Naive thymus-derived CD4-positive, alpha-beta T cell (primary cell): ENCODE measurements at regions of chr7 and their contacts with region 1.

Region 1: DNA sequence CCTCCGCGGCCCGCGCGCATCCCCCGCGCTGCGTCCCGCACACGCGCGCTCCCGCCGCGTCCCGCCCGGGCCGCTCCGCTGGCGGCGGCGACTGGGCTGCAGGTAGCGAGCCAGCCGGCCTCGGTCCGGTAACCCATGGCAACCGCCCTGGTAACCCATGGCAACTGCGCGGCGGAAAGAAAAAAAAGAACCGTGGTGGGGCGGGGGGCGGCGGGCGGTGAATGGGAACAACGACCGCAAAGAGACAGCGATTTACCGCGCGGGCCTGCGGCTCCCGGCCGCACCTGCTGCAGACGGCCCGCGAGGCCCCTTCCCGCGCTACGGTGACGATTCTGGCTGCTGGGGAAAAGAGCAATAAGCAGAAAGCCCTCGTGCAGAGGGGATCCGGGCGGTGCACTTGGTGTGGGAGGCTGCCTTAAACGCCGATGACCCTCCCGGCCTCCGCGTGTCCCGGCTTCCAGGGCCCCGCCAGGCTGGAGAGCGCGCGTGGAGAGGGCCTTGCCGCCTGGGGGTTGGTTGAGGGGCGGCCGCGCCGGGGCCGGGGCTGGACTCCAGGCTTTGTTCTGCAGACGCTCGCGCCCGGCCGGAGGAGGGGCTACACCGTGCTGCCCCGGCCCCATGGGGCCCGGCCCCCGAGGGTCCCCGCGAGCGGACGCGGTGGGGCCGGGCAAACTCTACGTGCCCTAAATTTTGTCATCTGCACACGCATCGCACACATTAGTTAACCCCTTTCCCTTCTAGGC is 84.7 kb downstream of the SNX10 start:
- DNase-seq: peak in 7 of 9 donors; percentile 13 to 56 (median 20)
- ATAC-seq: peak; percentile 51
- H3K4me3 ChIP-seq: peak overlapping the region; percentile 54
- H3K4me3 Mint-ChIP-seq: peak overlapping the region; percentile 83 to 95 (median 85)
- H3K27ac ChIP-seq: no peak overlapping the region
- H3K27ac Mint-ChIP-seq: peak overlapping the region in 1 of 9 donors; percentile 65
- H3K4me1 ChIP-seq: peaks cover 4 to 6% of the 10 kb centered on the region in 2 donors
- H3K4me1 Mint-ChIP-seq: peaks cover 0 to 8% (median 4%) of the 10 kb centered on the region in 7 donors
- H3K27me3 ChIP-seq: peaks cover 4 to 24% of the 10 kb centered on the region in 2 donors
- H3K27me3 Mint-ChIP-seq: peaks cover 28 to 62% (median 37%) of the 10 kb centered on the region in 5 donors

Region 2: DNA sequence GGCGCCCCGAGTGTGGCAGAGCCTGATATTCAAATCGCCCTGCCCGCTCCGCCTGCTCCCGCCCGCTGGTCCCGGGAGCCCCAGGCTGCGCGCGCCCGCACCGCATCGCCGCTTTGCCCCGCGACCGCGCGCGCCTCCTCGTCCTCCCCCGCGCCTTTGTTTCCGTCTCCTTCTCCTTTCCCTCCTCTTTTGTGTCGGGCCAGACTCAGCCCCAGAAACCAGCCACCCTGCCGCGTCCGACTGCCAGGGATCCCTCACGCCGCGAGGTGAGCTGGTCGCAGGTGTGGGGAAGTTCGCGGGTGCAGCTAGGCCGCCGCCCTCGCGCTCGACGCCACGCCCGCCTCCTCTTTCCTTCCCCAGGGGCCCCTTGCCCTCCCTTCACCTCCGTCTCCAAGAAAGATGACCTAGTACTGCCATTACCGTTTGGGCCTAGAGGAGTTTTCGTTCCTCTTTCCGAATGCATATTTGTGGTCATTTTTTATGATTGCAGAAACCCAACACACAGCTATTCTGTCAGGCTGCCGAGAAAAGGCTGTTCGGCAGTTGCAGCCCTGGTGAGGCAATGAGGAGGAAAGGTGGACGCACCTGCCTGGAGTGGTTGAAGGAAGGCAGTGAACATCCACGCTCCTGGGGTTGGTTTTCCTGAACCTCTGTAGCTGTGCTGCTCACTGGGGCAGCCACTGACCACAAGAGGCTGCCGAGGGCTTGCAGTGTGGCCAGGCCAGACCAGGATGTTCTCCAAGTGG is 22.6 kb after region 1 on chr7:
- CTCF ChIA-PET with region 1: no interaction called
- POLR2A ChIA-PET with region 1: no interaction called
- intact Hi-C with region 1: loop called in 1 of 2 experiments (anchors 2 kb)
- DNase-seq: peak in 6 of 9 donors; percentile 8 to 62 (median 10)
- ATAC-seq: peak; percentile 78
- H3K4me3 ChIP-seq: peak overlapping the region; percentile 46
- H3K4me3 Mint-ChIP-seq: peak overlapping the region; percentile 72 to 98 (median 90)
- H3K27ac ChIP-seq: no peak overlapping the region
- H3K27ac Mint-ChIP-seq: peak overlapping the region in 2 of 9 donors; percentile 20 to 73
- H3K4me1 ChIP-seq: no peaks in the 10 kb centered on the region
- H3K4me1 Mint-ChIP-seq: peaks cover 7 to 16% (median 12%) of the 10 kb centered on the region in 7 donors
- H3K27me3 ChIP-seq: peaks cover 0 to 6% of the 10 kb centered on the region in 2 donors
- H3K27me3 Mint-ChIP-seq: peaks cover 34 to 62% (median 55%) of the 10 kb centered on the region in 5 donors

Region 3: DNA sequence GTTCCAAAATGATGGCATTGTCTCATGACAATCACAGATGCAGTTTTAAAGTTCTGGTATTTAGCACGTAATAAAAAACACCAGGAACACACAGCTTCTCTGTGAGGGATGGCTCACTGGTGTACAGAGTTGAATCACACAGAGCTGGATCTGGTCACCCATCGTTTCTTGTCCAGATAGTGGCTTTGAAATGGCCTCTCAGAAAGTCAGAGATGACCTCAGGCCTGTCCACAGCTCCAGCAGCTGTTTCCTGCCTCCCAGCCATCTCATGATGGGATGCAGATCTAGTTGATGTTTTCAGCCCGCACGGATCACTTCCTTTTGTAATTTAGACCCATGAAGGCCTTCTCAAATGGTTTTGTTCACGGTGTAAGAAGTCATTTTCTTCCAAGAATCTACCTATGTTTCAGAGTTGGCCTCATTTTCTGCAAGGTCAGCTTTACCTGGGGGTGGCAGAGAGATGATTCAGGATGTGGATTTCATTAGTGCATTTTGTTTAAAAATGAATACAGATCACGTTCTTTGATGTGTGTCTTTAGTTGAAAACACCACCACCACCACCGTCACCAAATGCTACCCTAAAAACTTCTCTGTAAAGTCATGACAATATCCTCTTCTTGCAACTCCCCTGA is 81.5 kb after region 1 on chr7:
- CTCF ChIA-PET with region 1: no interaction called
- POLR2A ChIA-PET with region 1: no interaction called
- intact Hi-C with region 1: no loop called
- DNase-seq: no peak
- ATAC-seq: no peak
- H3K4me3 ChIP-seq: no peak overlapping the region
- H3K4me3 Mint-ChIP-seq: no peak overlapping the region
- H3K27ac ChIP-seq: no peak overlapping the region
- H3K27ac Mint-ChIP-seq: no peak overlapping the region
- H3K4me1 ChIP-seq: no peaks in the 10 kb centered on the region
- H3K4me1 Mint-ChIP-seq: no peaks in the 10 kb centered on the region
- H3K27me3 ChIP-seq: no peaks in the 10 kb centered on the region
- H3K27me3 Mint-ChIP-seq: peaks cover 0 to 14% (median 9%) of the 10 kb centered on the region in 5 donors

Region 4: DNA sequence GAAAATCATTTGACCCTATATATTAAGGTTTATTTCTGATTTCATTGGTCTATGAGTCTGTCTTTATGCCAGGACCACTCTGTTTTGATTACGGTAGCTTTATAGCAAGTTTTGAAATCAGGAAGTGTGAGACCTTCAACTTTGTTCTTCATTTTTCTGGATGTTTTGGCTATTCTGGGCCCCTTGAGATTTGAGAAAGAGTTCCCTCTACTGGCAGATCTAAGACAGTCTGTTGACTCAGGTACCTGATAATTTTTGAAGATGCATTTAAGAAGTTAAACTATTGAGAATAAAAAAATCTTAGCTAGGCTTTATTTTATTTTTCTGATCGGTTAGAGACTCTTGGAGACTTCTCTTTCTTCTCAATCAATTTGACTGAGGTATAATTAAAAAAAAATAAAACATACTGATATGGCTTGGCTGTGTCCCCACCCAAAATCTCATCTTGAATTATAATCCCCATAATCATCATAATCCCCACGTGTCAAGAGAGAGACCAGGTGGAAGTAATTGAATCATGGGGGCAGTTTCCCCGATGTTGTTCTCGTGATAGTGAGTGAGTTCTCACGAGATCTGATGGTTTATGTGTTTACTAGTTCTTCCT is 124.5 kb after region 1 on chr7:
- CTCF ChIA-PET with region 1: no interaction called
- POLR2A ChIA-PET with region 1: interaction called, 3 read pairs
- intact Hi-C with region 1: loop called (anchors 1 kb)
- DNase-seq: peak in 3 of 9 donors; percentile 7 to 18 (median 9)
- ATAC-seq: peak; percentile 46
- H3K4me3 ChIP-seq: no peak overlapping the region
- H3K4me3 Mint-ChIP-seq: no peak overlapping the region
- H3K27ac ChIP-seq: no peak overlapping the region
- H3K27ac Mint-ChIP-seq: no peak overlapping the region
- H3K4me1 ChIP-seq: no peaks in the 10 kb centered on the region
- H3K4me1 Mint-ChIP-seq: peaks cover 0 to 2% (median 0%) of the 10 kb centered on the region in 7 donors
- H3K27me3 ChIP-seq: no peaks in the 10 kb centered on the region
- H3K27me3 Mint-ChIP-seq: peaks cover 0 to 30% (median 9%) of the 10 kb centered on the region in 5 donors

Region 5: DNA sequence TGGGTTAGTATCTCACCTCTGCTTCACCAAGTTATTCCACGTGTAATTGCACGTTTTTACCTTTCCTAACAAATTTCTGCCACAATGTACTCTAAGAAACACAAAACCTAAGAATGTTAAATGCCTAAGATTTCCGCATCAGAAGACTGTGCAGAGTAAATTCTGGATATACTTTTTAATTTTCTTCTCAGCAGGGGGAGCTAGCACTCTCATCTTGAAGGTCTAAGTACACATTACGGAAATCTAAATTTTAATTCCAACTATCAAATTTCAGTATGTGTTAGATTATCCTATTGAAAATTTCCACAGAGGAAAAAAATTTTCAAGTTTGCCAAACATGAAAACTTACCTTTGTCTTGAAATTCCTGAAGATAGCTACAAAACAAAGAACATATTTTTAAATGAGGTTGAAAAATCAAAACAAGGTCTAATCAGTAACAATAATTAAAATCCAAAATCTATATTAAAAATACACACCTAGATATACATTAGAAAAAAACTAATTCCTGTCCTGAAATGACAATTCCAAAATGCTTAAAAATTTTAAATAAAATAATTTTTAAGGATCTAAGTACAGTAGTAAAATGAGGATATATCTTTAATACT is 477.5 kb after region 1 on chr7:
- CTCF ChIA-PET with region 1: no interaction called
- POLR2A ChIA-PET with region 1: no interaction called
- intact Hi-C with region 1: loop called in 1 of 2 experiments (anchors 10 kb)
- DNase-seq: peak in 5 of 9 donors; percentile 12 to 36 (median 30)
- ATAC-seq: no peak
- H3K4me3 ChIP-seq: no peak overlapping the region
- H3K4me3 Mint-ChIP-seq: no peak overlapping the region
- H3K27ac ChIP-seq: no peak overlapping the region
- H3K27ac Mint-ChIP-seq: no peak overlapping the region
- H3K4me1 ChIP-seq: no peaks in the 10 kb centered on the region
- H3K4me1 Mint-ChIP-seq: peaks cover 0 to 13% (median 3%) of the 10 kb centered on the region in 7 donors
- H3K27me3 ChIP-seq: peaks cover 0 to 20% of the 10 kb centered on the region in 2 donors
- H3K27me3 Mint-ChIP-seq: peaks cover 44 to 73% (median 48%) of the 10 kb centered on the region in 5 donors

Region 6: GRCh38 chr7:26864309-26865093 is 488.2 kb after region 1 on chr7 and contains the start of gene SKAP2:
- CTCF ChIA-PET with region 1: no interaction called
- POLR2A ChIA-PET with region 1: no interaction called
- intact Hi-C with region 1: loop called (anchors 10 kb)
- DNase-seq: peak; percentile 41 to 89 (median 63)
- ATAC-seq: peak; percentile 93
- H3K4me3 ChIP-seq: peak within 1 kb of the TSS; percentile 88
- H3K4me3 Mint-ChIP-seq: peak within 1 kb of the TSS; percentile 72 to 92 (median 88)
- H3K27ac ChIP-seq: peak within 1 kb of the TSS; percentile 23
- H3K27ac Mint-ChIP-seq: peak within 1 kb of the TSS; percentile 36 to 89 (median 74)
- H3K4me1 ChIP-seq: peaks cover 0 to 4% of the 10 kb centered on the region in 2 donors
- H3K4me1 Mint-ChIP-seq: peaks cover 5 to 24% (median 19%) of the 10 kb centered on the region in 7 donors
- H3K27me3 ChIP-seq: peaks cover 0 to 9% of the 10 kb centered on the region in 2 donors
- H3K27me3 Mint-ChIP-seq: peaks cover 46 to 68% (median 49%) of the 10 kb centered on the region in 5 donors
- total RNA-seq, gene SKAP2: 2.7 to 31.4 (median 5.1) TPM

Region 7: DNA sequence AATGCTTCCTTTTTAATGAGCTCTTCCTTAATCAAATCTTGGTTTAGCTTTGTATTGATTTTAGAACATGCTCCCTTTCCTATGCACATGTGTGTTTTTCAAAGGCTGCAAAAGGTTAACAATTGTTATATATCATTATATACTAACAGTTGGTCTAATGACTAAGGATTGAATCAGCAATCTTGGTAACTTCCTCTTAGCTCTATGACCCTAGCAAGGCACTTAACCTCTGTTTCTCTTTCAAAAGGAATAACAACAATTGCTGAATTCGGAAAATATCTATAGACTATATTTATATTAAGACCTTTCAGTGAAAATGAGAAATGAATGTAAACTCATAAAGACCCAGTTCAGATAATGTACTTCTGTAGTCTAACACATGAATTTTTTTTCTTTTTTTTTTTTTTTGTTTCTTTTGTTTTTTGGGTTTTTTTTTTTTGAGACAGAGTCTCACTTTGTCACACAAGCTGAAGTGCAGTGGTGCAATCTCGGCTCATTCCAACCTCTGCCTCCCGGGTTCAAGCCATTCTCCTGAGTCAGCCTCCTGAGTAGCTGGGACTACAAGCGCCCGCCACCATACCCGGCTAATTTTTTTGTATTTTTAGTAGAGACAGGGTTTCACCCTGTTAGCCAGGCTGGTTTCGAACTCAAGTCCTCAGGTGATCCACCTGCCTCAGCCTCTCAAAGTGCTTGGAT is 670.7 kb after region 1 on chr7:
- CTCF ChIA-PET with region 1: no interaction called
- POLR2A ChIA-PET with region 1: no interaction called
- intact Hi-C with region 1: no loop called
- DNase-seq: no peak
- ATAC-seq: peak; percentile 49
- H3K4me3 ChIP-seq: no peak overlapping the region
- H3K4me3 Mint-ChIP-seq: no peak overlapping the region
- H3K27ac ChIP-seq: no peak overlapping the region
- H3K27ac Mint-ChIP-seq: no peak overlapping the region
- H3K4me1 ChIP-seq: no peaks in the 10 kb centered on the region
- H3K4me1 Mint-ChIP-seq: no peaks in the 10 kb centered on the region
- H3K27me3 ChIP-seq: no peaks in the 10 kb centered on the region
- H3K27me3 Mint-ChIP-seq: peaks cover 4 to 15% (median 12%) of the 10 kb centered on the region in 5 donors